Naive thymus-derived CD8-positive, alpha-beta T cell (primary cell): ENCODE measurements at regions of chr1 and their contacts with region 1.

Region 1: GRCh38 chr1:25022361-25023189 is 92.5 kb upstream of the RUNX3 start:
- DNase-seq: peak; percentile 86 to 99 (median 96)
- ATAC-seq: peak; percentile 79 to 90
- H3K4me3 Mint-ChIP-seq: peak overlapping the region; percentile 64 to 88 (median 80)
- H3K27ac Mint-ChIP-seq: peak overlapping the region; percentile 95 to 99 (median 97)
- H3K4me1 Mint-ChIP-seq: peaks cover 41 to 93% (median 88%) of the 10 kb centered on the region in 4 donors
- H3K27me3 Mint-ChIP-seq: no peaks in the 10 kb centered on the region

Region 2: DNA sequence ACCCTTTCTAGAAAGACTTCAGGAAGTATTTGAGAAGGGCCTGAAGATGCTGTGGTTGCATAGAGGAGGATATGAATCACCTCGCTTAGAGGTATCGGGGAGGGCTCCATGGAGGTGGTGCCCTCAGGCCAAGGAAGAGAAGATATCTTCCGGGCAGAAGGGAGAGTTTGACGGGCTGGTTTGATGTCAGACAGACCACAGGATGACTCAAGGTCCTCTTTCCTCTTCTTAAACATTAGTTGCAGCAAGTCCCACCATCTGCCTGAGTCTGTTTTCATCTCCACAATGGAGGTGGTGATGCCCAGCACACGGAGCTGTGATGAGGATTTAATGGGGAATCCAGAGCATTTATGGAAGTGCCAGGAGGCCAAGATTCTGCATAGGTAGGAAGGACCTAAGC is 67.4 kb before region 1 on chr1:
- POLR2A ChIA-PET with region 1: interaction called, 10 read pairs
- DNase-seq: peak in 5 of 10 donors; percentile 21 to 76 (median 49)
- ATAC-seq: peak; percentile 73 to 75
- H3K4me3 Mint-ChIP-seq: peak overlapping the region; percentile 31 to 88 (median 75)
- H3K27ac Mint-ChIP-seq: peak overlapping the region; percentile 51 to 98 (median 89)
- H3K4me1 Mint-ChIP-seq: peaks cover 43 to 96% (median 90%) of the 10 kb centered on the region in 4 donors
- H3K27me3 Mint-ChIP-seq: no peaks in the 10 kb centered on the region

Region 3: DNA sequence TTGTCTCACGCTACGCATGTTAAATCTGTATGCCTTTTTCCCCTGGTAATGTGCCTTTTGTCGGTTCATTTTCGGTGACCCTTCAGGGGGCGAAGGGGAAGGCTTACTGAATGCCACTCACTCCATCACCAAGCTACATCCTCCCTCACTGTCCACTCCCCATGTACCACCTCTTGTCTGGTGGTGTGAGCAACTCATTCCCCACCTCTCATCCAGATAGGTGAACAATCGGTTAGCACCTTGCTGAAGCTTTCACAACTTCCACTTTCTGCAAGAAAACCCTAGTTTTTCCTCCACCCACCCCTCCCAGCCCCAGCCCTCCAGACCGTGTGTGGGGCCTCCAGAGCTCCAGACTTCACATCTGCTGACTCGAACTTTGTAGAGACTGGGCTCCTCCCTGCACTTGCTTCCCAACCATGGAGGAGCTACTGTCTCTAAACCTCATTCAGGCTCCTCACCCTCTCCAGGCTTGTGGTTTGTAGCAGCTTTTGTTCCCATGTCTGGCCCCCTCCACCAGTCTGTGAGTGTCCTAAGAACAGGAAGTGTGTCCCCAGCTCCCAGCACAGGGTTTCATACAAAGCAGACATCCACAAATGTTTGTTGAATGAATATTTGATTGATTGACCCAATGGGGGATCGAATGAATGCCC is 44.1 kb before region 1 on chr1:
- POLR2A ChIA-PET with region 1: interaction called, 13 read pairs
- DNase-seq: no peak
- ATAC-seq: no peak
- H3K4me3 Mint-ChIP-seq: peak overlapping the region in 5 of 10 donors; percentile 16 to 47 (median 24)
- H3K27ac Mint-ChIP-seq: peak overlapping the region in 9 of 10 donors; percentile 61 to 88 (median 74)
- H3K4me1 Mint-ChIP-seq: peaks cover 48 to 79% (median 73%) of the 10 kb centered on the region in 4 donors
- H3K27me3 Mint-ChIP-seq: no peaks in the 10 kb centered on the region

Region 4: GRCh38 chr1:24996983-24997893 is 25.3 kb before region 1 on chr1:
- POLR2A ChIA-PET with region 1: interaction called, 139 read pairs
- DNase-seq: peak; percentile 38 to 88 (median 68)
- ATAC-seq: peak; percentile 80 to 83
- H3K4me3 Mint-ChIP-seq: peak overlapping the region; percentile 7 to 87 (median 68)
- H3K27ac Mint-ChIP-seq: peak overlapping the region; percentile 92 to 100 (median 96)
- H3K4me1 Mint-ChIP-seq: peaks cover 43 to 92% (median 89%) of the 10 kb centered on the region in 4 donors
- H3K27me3 Mint-ChIP-seq: no peaks in the 10 kb centered on the region

Region 5: DNA sequence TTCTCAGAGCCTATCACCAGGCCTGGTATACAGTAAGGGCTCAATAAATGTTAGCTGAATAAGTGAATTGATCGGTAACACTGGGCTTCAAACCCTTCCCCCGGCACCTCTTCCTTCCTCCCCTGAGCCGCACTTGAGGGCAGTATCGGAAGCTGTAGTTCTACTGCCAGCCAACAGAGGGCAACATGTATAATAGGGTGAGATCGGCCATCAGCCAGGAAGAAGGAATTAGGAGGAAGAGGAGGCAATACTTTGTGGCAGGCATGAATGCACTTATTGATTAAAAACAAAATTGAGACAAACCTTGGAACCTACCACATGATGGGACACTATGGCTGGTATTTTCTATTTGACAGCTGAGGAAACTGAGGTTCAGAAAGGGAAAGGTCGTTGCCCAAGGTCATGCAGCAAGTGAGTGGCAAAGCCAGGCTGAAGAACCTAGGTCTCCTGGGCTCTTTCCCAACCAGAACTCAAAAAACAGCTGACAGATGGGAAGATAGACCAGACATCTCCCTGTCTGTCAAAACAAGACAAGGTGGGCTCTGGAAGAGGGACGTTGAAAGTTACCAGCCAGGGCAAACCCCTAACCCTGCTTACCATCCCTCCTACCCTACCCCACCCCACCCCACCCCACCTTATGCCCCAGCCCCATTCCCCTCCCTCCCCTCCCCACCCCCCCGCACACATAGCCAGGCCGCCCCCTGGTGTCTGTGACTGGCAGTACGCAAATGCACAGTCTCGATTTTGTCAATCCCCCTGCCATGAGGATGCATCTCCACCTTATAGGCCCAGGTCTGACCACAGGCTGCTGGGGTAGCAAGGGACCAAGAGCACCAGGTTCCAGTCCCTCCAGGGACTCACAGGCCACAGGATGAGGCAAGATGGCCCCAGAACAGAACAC is 14.8 kb after region 1 on chr1:
- POLR2A ChIA-PET with region 1: interaction called, 107 read pairs
- DNase-seq: peak; percentile 37 to 81 (median 56)
- ATAC-seq: peak; percentile 45 to 54
- H3K4me3 Mint-ChIP-seq: peak overlapping the region in 7 of 10 donors; percentile 1 to 29 (median 14)
- H3K27ac Mint-ChIP-seq: peak overlapping the region in 8 of 10 donors; percentile 12 to 90 (median 50)
- H3K4me1 Mint-ChIP-seq: peaks cover 32 to 42% (median 36%) of the 10 kb centered on the region in 4 donors
- H3K27me3 Mint-ChIP-seq: no peaks in the 10 kb centered on the region

Region 6: GRCh38 chr1:25128121-25128621 is 105.6 kb after region 1 on chr1:
- POLR2A ChIA-PET with region 1: no interaction called
- DNase-seq: no peak
- ATAC-seq: no peak
- H3K4me3 Mint-ChIP-seq: no peak overlapping the region
- H3K27ac Mint-ChIP-seq: no peak overlapping the region
- H3K4me1 Mint-ChIP-seq: no peaks in the 10 kb centered on the region
- H3K27me3 Mint-ChIP-seq: peaks cover 0 to 2% (median 0%) of the 10 kb centered on the region in 5 donors